PC-3 (cell line): ENCODE measurements at regions of chr7 and their contacts with region 1.

Region 1: DNA sequence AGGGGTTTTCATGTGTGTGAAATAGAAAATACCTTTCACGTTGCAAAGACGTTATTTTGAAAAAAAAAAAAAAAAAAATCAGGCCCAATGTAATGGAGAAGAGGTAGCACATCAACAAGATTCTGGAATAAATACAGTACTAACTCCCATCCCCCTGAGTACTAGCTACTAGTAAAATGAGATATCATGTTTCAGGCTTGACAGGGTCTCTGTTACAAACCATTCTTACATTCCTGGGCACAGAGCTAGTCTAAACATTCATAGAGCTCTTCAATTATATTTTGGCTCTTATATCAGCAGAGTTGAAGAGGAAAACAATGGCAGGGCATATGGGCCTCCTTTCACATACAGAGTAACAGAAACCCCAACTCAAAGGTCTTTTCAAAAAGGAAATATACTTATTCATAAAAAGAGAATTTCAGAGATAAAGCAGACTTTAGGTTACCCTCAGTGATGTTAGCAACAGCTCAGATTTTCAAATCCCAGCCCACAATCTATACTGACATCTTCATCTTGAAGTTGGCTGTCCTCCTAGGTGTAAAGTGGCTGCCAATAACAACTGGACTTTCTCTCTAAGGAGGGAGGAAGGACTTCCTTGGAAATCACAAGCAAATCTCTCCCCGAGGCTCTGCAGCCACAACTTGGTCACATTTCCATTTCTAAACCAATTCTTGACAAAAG is 18.6 kb downstream of the C7orf33 start:
- DNase-seq: no peak
- ATAC-seq: no peak
- H3K4me3 ChIP-seq: no peak overlapping the region
- H3K27ac ChIP-seq: no peak overlapping the region
- H3K4me1 ChIP-seq: no peaks in the 10 kb centered on the region
- H3K27me3 ChIP-seq: peaks cover 17% of the 10 kb centered on the region
- CTCF ChIP-seq: no peak

Region 2: GRCh38 chr7:148773334-148773733 is 164.1 kb after region 1 on chr7:
- CTCF ChIA-PET with region 1: no interaction called
- POLR2A ChIA-PET with region 1: interaction called, 11 read pairs
- intact Hi-C with region 1: no loop called
- DNase-seq: no peak
- ATAC-seq: no peak
- H3K4me3 ChIP-seq: no peak overlapping the region
- H3K27ac ChIP-seq: peak overlapping the region; percentile 57
- H3K4me1 ChIP-seq: peaks cover 17% of the 10 kb centered on the region
- H3K27me3 ChIP-seq: no peaks in the 10 kb centered on the region
- CTCF ChIP-seq: no peak